GM12878 (cell line): ENCODE measurements at regions of chr14 and their contacts with region 1.

Region 1: GRCh38 chr14:22994762-22995275 is 12.5 kb upstream of the AJUBA start:
- DNase-seq: no peak
- ATAC-seq: peak; percentile 94
- H3K4me3 ChIP-seq: no peak overlapping the region
- H3K27ac ChIP-seq: no peak overlapping the region
- H3K4me1 ChIP-seq: no peaks in the 10 kb centered on the region
- H3K27me3 ChIP-seq: no peaks in the 10 kb centered on the region
- CTCF ChIP-seq: peak; percentile 65 to 75 (median 67)
- EP300 ChIP-seq: no peak
- POLR2A ChIP-seq: no peak
- RAD21 ChIP-seq: peak; percentile 64

Region 2: GRCh38 chr14:22836301-22837113 is 158.3 kb before region 1 on chr14 and contains the start of gene MMP14:
- CTCF ChIA-PET with region 1: no interaction called
- POLR2A ChIA-PET with region 1: no interaction called
- RAD21 ChIA-PET with region 1: no interaction called
- SMC1A ChIA-PET with region 1: no interaction called
- in situ Hi-C with region 1: no loop called
- intact Hi-C with region 1: no loop called
- DNase-seq: no peak
- ATAC-seq: no peak
- H3K4me3 ChIP-seq: no peak within 1 kb of the TSS
- H3K27ac ChIP-seq: no peak within 1 kb of the TSS
- H3K4me1 ChIP-seq: peaks cover 21% of the 10 kb centered on the region
- H3K27me3 ChIP-seq: no peaks in the 10 kb centered on the region
- CTCF ChIP-seq: no peak
- EP300 ChIP-seq: no peak
- POLR2A ChIP-seq: 0 out of 2 replicates have a peak, but pooled peaks have one; percentile 23
- RAD21 ChIP-seq: no peak
- polyA plus RNA-seq, gene MMP14: not detected

Region 3: GRCh38 chr14:22955702-22956569 is 38.9 kb before region 1 on chr14:
- CTCF ChIA-PET with region 1: interaction called, 91 read pairs
- POLR2A ChIA-PET with region 1: no interaction called
- RAD21 ChIA-PET with region 1: interaction called, 3 read pairs
- SMC1A ChIA-PET with region 1: no interaction called
- in situ Hi-C with region 1: no loop called
- intact Hi-C with region 1: no loop called
- DNase-seq: no peak
- ATAC-seq: no peak
- H3K4me3 ChIP-seq: peak overlapping the region; percentile 85
- H3K27ac ChIP-seq: peak overlapping the region; percentile 90
- H3K4me1 ChIP-seq: no peaks in the 10 kb centered on the region
- H3K27me3 ChIP-seq: no peaks in the 10 kb centered on the region
- CTCF ChIP-seq: no peak
- EP300 ChIP-seq: no peak
- POLR2A ChIP-seq: no peak
- RAD21 ChIP-seq: no peak

Region 4: DNA sequence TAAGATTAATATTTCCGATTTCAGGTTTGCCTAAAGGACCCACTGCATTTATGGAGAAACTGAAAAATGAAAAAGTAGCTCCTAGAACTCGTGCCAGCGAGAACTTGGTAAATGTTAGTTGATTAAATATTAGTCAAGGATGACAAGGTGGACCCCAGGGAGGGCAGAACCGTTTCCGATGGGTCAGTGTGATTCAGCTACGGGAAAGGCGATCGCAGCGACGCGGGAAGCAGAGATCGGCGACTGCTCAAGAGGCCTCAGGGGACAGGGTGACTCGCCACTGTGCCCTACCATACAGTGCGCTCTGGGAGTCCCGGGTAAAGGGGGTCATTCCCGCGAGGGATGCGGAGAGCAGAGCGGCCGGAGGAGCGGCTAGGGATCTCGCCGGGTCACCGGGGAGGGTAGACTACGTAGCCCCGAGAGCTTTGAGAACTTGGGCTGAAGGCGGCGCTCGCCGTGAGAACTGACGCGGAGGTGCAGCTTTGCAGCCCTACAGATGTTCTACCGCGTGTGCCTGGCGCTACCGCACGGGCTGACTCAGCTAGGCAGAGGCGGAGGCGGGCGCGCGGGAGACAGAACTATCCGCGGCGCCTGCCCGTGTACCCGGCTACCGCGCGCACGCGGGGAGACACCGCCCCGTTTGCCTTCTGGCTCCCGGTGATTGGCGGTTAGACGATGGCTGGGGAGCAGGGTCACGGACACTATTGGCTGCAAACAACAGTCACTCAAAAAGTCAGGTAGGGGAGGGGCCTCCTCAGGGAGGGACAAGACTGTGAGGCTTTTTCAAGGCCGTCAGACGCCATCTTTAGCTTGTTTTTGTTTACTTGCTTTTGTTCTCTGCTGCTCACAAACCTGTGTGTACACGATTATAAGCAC is 12.0 kb after region 1 on chr14:
- CTCF ChIA-PET with region 1: interaction called, 108 read pairs
- POLR2A ChIA-PET with region 1: interaction called, 29 read pairs
- RAD21 ChIA-PET with region 1: interaction called, 37 read pairs
- SMC1A ChIA-PET with region 1: interaction called, 67 read pairs
- in situ Hi-C with region 1: no loop called
- intact Hi-C with region 1: no loop called
- DNase-seq: peak; percentile 96
- ATAC-seq: peak; percentile 98
- H3K4me3 ChIP-seq: peak overlapping the region; percentile 71
- H3K27ac ChIP-seq: peak overlapping the region; percentile 91
- H3K4me1 ChIP-seq: peaks cover 21% of the 10 kb centered on the region
- H3K27me3 ChIP-seq: no peaks in the 10 kb centered on the region
- CTCF ChIP-seq: peak in 2 of 3 experiments; percentile 26 to 30; a peak in 3 of 6 replicates
- EP300 ChIP-seq: no peak
- POLR2A ChIP-seq: peak; percentile 99
- RAD21 ChIP-seq: no peak

Region 5: GRCh38 chr14:23025151-23025814 is 30.5 kb after region 1 on chr14:
- CTCF ChIA-PET with region 1: interaction called, 43 read pairs
- POLR2A ChIA-PET with region 1: interaction called, 5 read pairs
- RAD21 ChIA-PET with region 1: no interaction called
- SMC1A ChIA-PET with region 1: interaction called, 10 read pairs
- in situ Hi-C with region 1: no loop called
- intact Hi-C with region 1: no loop called
- DNase-seq: no peak
- ATAC-seq: peak; percentile 52; the same call in 2 of the 3 replicates
- H3K4me3 ChIP-seq: no peak overlapping the region
- H3K27ac ChIP-seq: no peak overlapping the region
- H3K4me1 ChIP-seq: no peaks in the 10 kb centered on the region
- H3K27me3 ChIP-seq: no peaks in the 10 kb centered on the region
- CTCF ChIP-seq: no peak
- EP300 ChIP-seq: no peak
- POLR2A ChIP-seq: no peak
- RAD21 ChIP-seq: no peak

Region 6: DNA sequence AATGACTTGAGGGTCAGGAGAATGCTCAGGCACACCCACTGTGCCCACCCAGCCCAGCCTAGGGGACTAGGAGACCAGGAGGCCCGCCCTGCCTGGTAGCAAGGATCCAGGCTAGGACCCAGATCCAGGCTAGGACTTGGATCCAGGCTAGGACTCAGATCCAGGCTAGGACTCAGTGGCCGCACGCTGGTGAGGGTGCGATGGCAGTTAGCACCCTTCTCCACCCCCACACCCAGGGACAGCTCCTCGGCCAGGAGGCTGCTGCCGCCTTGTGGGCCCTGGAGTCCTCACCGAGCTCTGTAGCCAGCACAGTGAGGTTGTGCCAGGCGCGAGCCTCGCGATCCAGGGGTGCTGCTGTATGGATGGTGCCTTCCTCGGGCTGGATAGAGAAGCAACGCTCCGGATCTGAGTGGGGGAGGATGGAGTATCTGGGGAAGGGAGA is 57.4 kb after region 1 on chr14:
- CTCF ChIA-PET with region 1: interaction called, 853 read pairs
- POLR2A ChIA-PET with region 1: interaction called, 4 read pairs
- RAD21 ChIA-PET with region 1: interaction called, 224 read pairs
- SMC1A ChIA-PET with region 1: interaction called, 156 read pairs
- in situ Hi-C with region 1: loop called (anchors 5 kb)
- intact Hi-C with region 1: loop called (anchors 1 kb)
- DNase-seq: no peak
- ATAC-seq: no peak
- H3K4me3 ChIP-seq: no peak overlapping the region
- H3K27ac ChIP-seq: no peak overlapping the region
- H3K4me1 ChIP-seq: peaks cover 12% of the 10 kb centered on the region
- H3K27me3 ChIP-seq: no peaks in the 10 kb centered on the region
- CTCF ChIP-seq: peak in 1 of 3 experiments; percentile 8; a peak in 1 of 6 replicates
- EP300 ChIP-seq: no peak
- POLR2A ChIP-seq: no peak
- RAD21 ChIP-seq: no peak

Region 7: DNA sequence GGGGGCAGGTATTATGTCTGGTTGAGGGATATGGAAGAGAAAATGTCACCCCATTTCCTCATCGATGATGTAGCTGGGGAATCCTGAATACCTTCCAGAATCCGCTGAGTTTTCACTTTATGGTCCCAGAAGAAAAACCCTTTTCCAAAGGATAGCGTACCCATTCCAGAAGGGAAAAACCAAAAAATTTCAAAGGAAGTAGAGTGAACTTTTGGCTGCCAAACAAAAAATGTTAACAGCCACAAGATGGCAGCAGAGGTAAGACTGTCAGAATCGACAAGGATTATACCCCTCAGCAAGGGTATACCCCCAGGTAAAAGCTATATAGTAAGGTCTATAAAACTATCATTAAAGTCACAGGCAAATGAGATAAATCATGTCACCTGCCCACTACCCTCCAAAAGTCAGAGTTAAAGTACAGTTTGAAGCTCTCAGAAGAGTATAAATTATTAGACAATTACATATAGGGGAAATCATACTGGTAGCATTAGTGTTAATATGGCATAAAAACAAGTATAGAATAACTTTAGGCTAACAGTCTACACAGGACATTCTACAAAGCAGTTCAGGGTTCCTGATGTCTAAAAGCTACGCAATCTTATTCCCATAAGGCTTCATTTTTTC is 82.1 kb after region 1 on chr14:
- CTCF ChIA-PET with region 1: interaction called, 20 read pairs
- POLR2A ChIA-PET with region 1: interaction called, 3 read pairs
- RAD21 ChIA-PET with region 1: interaction called, 4 read pairs
- SMC1A ChIA-PET with region 1: no interaction called
- in situ Hi-C with region 1: no loop called
- intact Hi-C with region 1: no loop called
- DNase-seq: no peak
- ATAC-seq: peak; percentile 79
- H3K4me3 ChIP-seq: no peak overlapping the region
- H3K27ac ChIP-seq: no peak overlapping the region
- H3K4me1 ChIP-seq: 0 out of 2 replicates have a peak, but pooled peaks cover 1% of the 10 kb centered on the region
- H3K27me3 ChIP-seq: no peaks in the 10 kb centered on the region
- CTCF ChIP-seq: peak; percentile 49 to 60 (median 59)
- EP300 ChIP-seq: no peak
- POLR2A ChIP-seq: no peak
- RAD21 ChIP-seq: peak; percentile 48; the same call in 1 of the 2 replicates